Activated T-helper 1 cell treated with anti-CD3 and anti-CD28 coated beads, Interleukin-12 subunit alpha, Interleukin-12 subunit beta, Interleukin-2, Interleukin-4 antibody, amounts not matched to agents 30 ng/mL and 10 ng/mL and 1 ng/mL, durations not matched to agents 14 hours and 24 hours and 36 hours (primary cell): ENCODE measurements at regions of chr10 and their contacts with region 1.

Region 1: DNA sequence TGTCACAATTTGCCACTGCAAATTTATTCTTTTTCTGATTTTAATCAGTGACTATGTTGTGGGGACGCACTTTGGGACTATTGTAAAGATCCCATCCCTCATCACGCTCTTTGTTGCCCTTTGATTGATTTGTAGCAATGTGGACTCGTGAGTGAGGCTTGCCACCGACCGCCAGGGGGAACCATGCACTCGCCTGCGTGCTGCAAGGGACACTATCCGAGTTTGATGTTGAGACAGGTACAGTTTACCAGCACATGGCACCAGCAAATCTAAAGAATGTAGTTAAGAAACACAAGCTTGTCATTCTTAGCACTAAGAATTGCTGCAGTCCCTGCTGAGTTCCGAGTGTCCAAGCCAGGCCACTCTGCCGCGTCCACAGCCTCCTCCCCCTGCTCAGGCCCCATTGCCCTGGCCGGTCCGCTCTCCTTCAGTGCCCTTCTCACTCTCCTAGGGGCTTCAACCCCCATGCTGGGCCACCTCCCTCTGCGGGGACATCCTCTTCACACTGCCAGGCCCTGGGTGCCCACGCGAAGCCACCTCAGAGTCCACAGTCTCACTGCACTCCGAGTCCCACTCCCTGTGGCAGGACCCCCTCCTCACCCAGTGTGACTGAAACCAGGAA is 2.0 kb upstream of the SFTPA2 start:
- DNase-seq: peak; percentile 57
- H3K4me3 Mint-ChIP-seq: no peak overlapping the region
- H3K27ac Mint-ChIP-seq: no peak overlapping the region
- H3K4me1 Mint-ChIP-seq: peaks cover 10% of the 10 kb centered on the region
- H3K27me3 Mint-ChIP-seq: peaks cover 24% of the 10 kb centered on the region

Region 2: DNA sequence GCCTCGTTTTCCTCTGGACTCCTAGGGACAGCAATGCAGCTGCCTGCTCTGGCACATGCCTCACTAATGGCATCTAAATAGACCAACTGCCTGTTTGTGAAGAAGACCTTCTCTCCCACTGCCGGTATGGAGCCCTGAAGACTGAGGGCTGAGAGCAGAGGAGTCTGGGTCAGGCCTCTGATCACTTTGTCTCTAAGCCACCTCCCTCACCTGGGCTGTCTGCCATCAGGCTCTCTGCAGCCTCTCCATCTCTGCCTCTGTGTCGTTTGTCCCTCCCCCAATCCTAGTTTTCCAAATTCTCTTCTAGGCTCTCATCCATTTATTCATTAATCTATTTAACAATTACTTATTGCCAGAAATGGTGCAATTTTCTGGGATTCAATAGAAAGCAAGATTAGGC is 33.3 kb after region 1 on chr10:
- intact Hi-C with region 1: no loop called
- DNase-seq: no peak
- H3K4me3 Mint-ChIP-seq: no peak overlapping the region
- H3K27ac Mint-ChIP-seq: no peak overlapping the region
- H3K4me1 Mint-ChIP-seq: no peaks in the 10 kb centered on the region
- H3K27me3 Mint-ChIP-seq: peaks cover 17% of the 10 kb centered on the region

Region 3: GRCh38 chr10:79608505-79609375 is 46.5 kb after region 1 on chr10:
- intact Hi-C with region 1: loop called (anchors 1 kb)
- DNase-seq: peak; percentile 21
- H3K4me3 Mint-ChIP-seq: no peak overlapping the region
- H3K27ac Mint-ChIP-seq: no peak overlapping the region
- H3K4me1 Mint-ChIP-seq: peaks cover 11% of the 10 kb centered on the region
- H3K27me3 Mint-ChIP-seq: peaks cover 7% of the 10 kb centered on the region

Region 4: GRCh38 chr10:79929409-79929904 is 367.2 kb after region 1 on chr10:
- intact Hi-C with region 1: loop called (anchors 1 kb)
- DNase-seq: peak; percentile 64
- H3K4me3 Mint-ChIP-seq: no peak overlapping the region
- H3K27ac Mint-ChIP-seq: no peak overlapping the region
- H3K4me1 Mint-ChIP-seq: no peaks in the 10 kb centered on the region
- H3K27me3 Mint-ChIP-seq: peaks cover 29% of the 10 kb centered on the region

Region 5: DNA sequence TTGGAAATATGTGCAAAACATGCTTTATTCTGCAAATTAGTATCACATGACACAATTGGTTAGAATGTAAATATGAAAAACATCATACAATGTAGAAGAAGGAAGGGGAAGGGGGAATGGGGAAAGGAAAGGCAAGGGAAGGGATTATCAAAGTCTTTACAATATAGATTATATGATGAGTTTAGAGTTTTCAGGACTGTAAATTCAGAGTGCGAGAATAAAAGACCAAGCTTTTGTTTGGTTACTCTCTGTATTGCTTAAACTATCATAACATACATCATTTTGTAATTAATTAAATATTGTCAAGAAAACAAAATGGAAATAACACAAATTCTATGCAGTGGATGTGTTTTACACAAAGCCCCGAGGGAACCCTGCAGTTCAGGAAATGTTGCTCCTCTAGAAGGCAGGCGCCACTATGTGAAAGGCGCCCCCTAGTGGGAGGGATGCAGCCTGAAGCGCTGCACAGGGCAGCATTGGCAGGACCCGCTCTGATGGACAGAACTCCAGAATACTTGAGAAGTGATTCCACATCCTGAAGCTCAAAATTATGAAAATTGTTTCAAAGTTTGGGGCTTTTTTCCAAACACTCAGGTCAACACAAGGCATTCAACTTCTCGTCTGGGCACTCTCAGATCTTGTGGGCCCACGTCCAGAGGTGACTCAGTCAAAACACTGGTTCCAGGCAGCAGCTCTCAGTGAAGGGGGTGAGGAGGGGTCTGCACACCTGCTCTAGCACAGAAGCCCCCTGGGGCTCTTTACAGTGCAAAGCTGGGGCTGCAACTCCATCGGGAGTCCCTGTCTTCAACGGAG is 484.6 kb after region 1 on chr10:
- intact Hi-C with region 1: loop called (anchors 1 kb)
- DNase-seq: peak; percentile 47
- H3K4me3 Mint-ChIP-seq: no peak overlapping the region
- H3K27ac Mint-ChIP-seq: no peak overlapping the region
- H3K4me1 Mint-ChIP-seq: peaks cover 5% of the 10 kb centered on the region
- H3K27me3 Mint-ChIP-seq: peaks cover 10% of the 10 kb centered on the region